Common myeloid progenitor, CD34-positive (primary cell): ENCODE measurements at regions of chr12 and their contacts with region 1.

Region 1: DNA sequence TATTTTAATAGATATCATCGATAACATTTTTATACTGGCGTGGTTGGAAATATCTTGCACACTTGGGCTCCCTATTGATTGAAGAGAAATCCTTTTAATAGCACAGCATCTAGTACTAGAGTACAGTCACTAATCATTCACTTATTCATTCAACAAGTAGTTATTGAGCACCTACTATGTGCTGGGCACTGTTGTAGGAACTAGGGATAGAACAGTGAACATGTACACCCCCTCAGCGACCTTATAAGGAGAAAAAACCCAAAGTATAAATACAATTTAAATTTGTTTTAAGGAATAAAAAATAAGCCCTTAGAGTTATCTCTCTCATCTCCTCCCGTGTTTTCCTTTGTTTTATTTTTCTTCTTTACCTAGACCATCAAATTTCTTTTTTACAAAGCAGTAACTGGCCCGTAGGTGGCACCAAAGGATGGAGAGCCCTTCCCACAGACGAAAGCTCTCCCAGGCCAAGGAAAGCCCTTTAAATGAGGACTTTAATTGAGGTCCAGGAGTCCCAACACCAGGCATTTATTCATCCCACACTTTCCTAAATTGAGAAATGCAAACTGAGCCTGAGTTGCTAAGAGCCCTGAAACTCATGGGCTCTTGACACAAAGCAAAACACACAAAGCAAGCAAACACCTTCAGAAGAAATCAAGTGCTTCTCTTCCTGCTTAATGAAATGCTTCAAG is 29.0 kb downstream of the PEBP1 start:
- DNase-seq: peak in 1 of 3 donors; percentile 12
- H3K4me3 ChIP-seq: no peak overlapping the region
- H3K27ac ChIP-seq: no peak overlapping the region
- H3K4me1 ChIP-seq: no peaks in the 10 kb centered on the region
- H3K27me3 ChIP-seq: no peaks in the 10 kb centered on the region

Region 2: DNA sequence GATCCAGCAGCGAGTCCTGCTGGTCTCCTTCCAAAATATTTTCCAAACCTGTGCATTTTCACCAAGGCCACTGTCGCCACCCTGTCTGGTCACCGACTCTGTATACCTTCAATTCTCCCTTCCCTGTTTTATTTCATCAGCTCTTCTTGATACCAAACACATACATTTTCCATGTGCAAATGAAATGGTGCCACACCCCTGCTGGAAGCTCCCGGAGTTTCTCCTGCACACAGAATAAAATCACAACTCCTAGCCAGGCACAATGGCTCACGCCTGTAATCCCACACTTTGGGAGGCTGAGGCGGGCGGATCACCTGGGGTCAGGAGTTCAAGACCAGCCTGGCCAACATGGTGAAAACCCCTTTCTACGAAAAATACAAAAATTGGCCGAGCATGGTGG is 75.2 kb before region 1 on chr12:
- CTCF ChIA-PET with region 1: no interaction called
- POLR2A ChIA-PET with region 1: no interaction called
- DNase-seq: no peak
- H3K4me3 ChIP-seq: no peak overlapping the region
- H3K27ac ChIP-seq: no peak overlapping the region
- H3K4me1 ChIP-seq: no peaks in the 10 kb centered on the region
- H3K27me3 ChIP-seq: no peaks in the 10 kb centered on the region

Region 3: GRCh38 chr12:118150625-118151024 is 14.3 kb before region 1 on chr12:
- CTCF ChIA-PET with region 1: interaction called, 10 read pairs
- POLR2A ChIA-PET with region 1: interaction called, 3 read pairs
- DNase-seq: no peak
- H3K4me3 ChIP-seq: no peak overlapping the region
- H3K27ac ChIP-seq: no peak overlapping the region
- H3K4me1 ChIP-seq: no peaks in the 10 kb centered on the region
- H3K27me3 ChIP-seq: no peaks in the 10 kb centered on the region

Region 4: DNA sequence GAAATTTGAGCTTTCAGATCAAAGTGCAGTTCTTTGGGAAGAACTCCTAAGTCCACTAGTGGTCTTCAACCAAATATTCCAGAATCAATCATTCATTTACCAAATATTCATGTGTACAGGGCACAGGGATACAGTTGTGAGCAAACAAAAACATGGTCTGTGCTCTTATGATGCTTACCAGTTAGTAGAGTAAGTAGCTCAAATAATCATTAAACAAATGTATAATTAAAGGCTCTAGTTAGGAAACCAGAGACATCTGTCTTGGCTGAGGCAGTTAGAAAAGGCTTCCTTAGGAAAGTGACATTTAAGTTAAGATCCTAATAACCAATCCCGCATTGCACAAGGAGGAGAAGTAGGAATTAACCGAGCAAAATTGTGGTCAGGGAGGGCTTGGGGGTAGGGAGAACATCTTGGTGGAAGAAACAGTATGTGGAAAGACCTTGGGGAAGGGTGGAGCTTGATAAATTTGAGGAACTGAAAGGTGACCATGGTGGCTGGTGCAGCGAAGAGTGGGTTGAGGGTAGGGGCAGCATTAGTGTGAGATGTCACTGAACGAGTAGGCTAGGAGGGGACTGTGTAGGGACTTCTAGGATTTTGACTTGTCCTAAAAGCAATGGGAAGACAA is 11.0 kb after region 1 on chr12:
- CTCF ChIA-PET with region 1: interaction called, 12 read pairs
- POLR2A ChIA-PET with region 1: no interaction called
- DNase-seq: no peak
- H3K4me3 ChIP-seq: no peak overlapping the region
- H3K27ac ChIP-seq: no peak overlapping the region
- H3K4me1 ChIP-seq: no peaks in the 10 kb centered on the region
- H3K27me3 ChIP-seq: no peaks in the 10 kb centered on the region

Region 5: DNA sequence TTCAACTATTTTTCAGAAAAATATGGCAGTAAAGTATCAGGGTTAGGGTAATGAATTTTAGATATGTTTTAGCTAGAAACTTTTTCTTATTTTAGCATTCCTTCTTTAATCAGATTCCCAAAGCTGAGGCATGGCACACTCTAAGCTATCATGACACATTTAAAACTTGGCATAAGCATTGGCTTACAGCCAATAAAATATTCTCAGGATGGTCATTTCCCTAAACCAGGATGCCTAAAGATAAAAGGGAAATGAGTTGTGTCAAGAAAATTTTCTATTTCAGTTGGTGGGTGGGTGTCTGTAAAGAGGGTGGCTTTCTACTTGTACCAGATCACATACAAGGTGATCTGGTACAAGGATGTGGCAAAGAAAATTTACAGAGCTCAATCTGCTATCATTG is 18.8 kb after region 1 on chr12:
- CTCF ChIA-PET with region 1: interaction called, 12 read pairs
- POLR2A ChIA-PET with region 1: no interaction called
- DNase-seq: no peak
- H3K4me3 ChIP-seq: no peak overlapping the region
- H3K27ac ChIP-seq: peak overlapping the region in 1 of 2 experiments; percentile 18
- H3K4me1 ChIP-seq: peaks cover 0 to 1% (median 0%) of the 10 kb centered on the region in 4 experiments
- H3K27me3 ChIP-seq: no peaks in the 10 kb centered on the region